Heart left ventricle (tissue), 16 donors: ENCODE measurements at regions of chr4 and their contacts with region 1.

Region 1: GRCh38 chr4:47668810-47669408 is 169.0 kb downstream of the CORIN start:
- DNase-seq: no peak
- ATAC-seq: peak; percentile 53 to 81 (median 70)
- H3K4me3 ChIP-seq: no peak overlapping the region
- H3K27ac ChIP-seq: no peak overlapping the region
- H3K4me1 ChIP-seq: no peaks in the 10 kb centered on the region
- H3K27me3 ChIP-seq: no peaks in the 10 kb centered on the region
- CTCF ChIP-seq: peak; percentile 54 to 77 (median 65)
- POLR2A ChIP-seq: no peak

Region 2: DNA sequence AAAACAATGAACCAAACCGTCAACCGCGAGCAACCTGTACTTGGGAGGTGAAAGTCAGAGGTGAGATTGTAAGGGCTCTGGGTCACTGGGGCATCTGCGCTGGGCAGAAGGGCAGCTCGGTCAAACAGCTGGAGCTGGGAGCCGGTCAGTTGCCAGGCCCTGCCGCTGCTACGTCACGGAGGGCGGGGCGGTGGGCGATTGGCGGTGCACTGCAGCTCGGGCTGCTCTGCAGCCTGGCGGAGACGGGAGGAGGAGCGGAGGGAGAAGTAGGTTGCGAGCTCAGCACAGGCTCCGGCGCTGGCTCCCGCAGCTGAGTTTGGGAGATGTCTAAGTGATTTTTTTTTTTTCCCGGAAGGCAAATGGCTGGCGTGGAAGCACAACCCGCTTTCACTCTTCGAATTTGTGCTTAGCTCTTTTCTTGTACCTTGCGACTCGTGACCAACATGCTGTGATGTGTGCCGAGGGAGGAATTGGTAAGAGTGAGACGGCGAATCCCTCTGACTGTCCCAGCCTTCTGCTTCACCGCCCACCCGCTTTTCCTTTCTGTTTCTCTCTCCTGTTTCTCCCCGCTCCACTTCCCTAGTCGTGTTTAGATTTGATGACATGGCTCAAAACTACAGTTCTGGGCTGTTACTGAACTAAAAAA is 183.7 kb before region 1 on chr4 and contains the start of gene ATP10D:
- intact Hi-C with region 1: no loop called
- DNase-seq: peak; percentile 96 to 98 (median 98)
- ATAC-seq: peak; percentile 99 to 100 (median 100)
- H3K4me3 ChIP-seq: peak within 1 kb of the TSS; percentile 40 to 76 (median 68)
- H3K27ac ChIP-seq: peak within 1 kb of the TSS; percentile 62 to 94 (median 92)
- H3K4me1 ChIP-seq: peaks cover 0 to 38% (median 12%) of the 10 kb centered on the region in 12 donors
- H3K27me3 ChIP-seq: no peaks in the 10 kb centered on the region
- CTCF ChIP-seq: peak in 4 of 12 donors; percentile 24 to 50 (median 38)
- POLR2A ChIP-seq: peak in 1 of 2 donors; percentile 90
- total RNA-seq, gene ATP10D: 5.4 to 22.1 (median 8.1) TPM

Region 3: DNA sequence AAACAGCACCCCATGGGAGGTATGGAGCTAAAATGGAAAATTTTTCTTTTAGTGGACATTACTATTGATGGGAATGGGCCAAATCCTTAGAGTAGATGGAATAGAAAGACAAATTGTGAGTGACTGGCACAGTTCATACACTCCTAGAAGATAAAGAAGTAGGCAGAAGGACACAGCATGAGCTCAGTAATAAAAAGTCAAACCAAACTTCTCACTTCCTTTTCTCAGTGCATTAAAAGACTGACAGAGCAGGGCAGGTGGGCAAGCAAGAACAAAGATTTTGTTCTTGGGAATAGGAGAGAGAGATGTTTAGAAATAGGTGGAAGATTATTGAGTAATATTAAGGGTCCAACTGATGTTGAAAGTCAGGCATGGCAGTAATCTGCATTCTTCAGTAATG is 51.3 kb before region 1 on chr4:
- intact Hi-C with region 1: no loop called
- DNase-seq: no peak
- ATAC-seq: no peak
- H3K4me3 ChIP-seq: no peak overlapping the region
- H3K27ac ChIP-seq: no peak overlapping the region
- H3K4me1 ChIP-seq: no peaks in the 10 kb centered on the region
- H3K27me3 ChIP-seq: no peaks in the 10 kb centered on the region
- CTCF ChIP-seq: no peak
- POLR2A ChIP-seq: no peak

Region 4: GRCh38 chr4:47933840-47934239 is 264.9 kb after region 1 on chr4:
- intact Hi-C with region 1: loop called (anchors 2 to 10 kb)
- DNase-seq: no peak
- ATAC-seq: peak in 1 of 4 donors; percentile 58
- H3K4me3 ChIP-seq: no peak overlapping the region
- H3K27ac ChIP-seq: no peak overlapping the region
- H3K4me1 ChIP-seq: peaks cover 0 to 5% (median 0%) of the 10 kb centered on the region in 12 donors
- H3K27me3 ChIP-seq: peaks cover 0 to 7% (median 0%) of the 10 kb centered on the region in 9 donors
- CTCF ChIP-seq: peak; percentile 44 to 77 (median 66)
- POLR2A ChIP-seq: no peak

Region 5: DNA sequence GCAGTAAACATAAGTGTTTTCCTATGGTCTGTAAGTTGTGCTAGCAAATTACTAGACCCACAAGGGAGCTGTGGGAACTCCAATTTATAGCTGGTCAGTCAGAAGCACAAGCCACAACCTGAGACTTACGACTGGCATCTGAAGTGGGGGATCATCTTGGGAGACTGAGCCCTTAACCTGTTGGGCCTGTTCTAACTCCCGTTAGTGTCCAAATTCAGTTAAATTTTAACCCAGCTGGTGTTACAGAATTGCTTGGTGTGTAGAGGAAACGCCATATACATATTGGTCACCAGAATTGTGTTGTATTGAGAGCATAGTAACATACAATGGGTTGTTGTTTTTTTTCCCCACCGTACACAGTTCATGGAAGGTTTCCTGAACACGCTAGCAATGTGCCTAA is 270.5 kb after region 1 on chr4:
- intact Hi-C with region 1: loop called (anchors 2 to 10 kb)
- DNase-seq: no peak
- ATAC-seq: no peak
- H3K4me3 ChIP-seq: no peak overlapping the region
- H3K27ac ChIP-seq: no peak overlapping the region
- H3K4me1 ChIP-seq: no peaks in the 10 kb centered on the region
- H3K27me3 ChIP-seq: peaks cover 0 to 5% (median 0%) of the 10 kb centered on the region in 9 donors
- CTCF ChIP-seq: no peak
- POLR2A ChIP-seq: no peak

Region 6: DNA sequence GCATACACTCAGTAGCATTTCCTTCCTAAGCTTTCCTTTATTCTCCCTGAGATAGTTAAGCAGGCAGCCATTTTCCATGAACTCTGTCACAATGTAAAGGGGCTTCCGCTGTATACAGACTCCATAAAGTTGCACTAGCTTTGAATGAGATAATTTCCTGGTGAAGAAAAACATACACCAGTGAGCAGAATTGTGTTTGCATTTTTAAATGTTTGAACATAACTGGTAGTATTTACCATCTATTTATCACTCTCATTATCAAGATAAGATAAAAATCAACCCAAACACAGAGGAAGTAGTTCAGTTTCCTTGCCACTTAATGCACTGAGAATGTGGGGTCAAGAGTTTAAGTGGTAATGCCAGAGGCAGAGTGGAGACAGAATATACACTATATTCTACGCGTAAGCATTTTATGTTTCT is 411.1 kb after region 1 on chr4:
- intact Hi-C with region 1: loop called in 1 of 10 experiments (anchors 10 kb)
- DNase-seq: no peak
- ATAC-seq: no peak
- H3K4me3 ChIP-seq: no peak overlapping the region
- H3K27ac ChIP-seq: no peak overlapping the region
- H3K4me1 ChIP-seq: no peaks in the 10 kb centered on the region
- H3K27me3 ChIP-seq: no peaks in the 10 kb centered on the region
- CTCF ChIP-seq: no peak
- POLR2A ChIP-seq: no peak